ENCODE measurements at regions of chr6 and their contacts with region 1.

Region 1: GRCh38 chr6:28838634-28839442 is 84.9 kb downstream of the TRIM27 start:
- DNase-seq: peak; percentile 71 to 83
- H3K4me3 ChIP-seq: peak overlapping the region; percentile 95
- H3K27ac ChIP-seq: peak overlapping the region; percentile 44
- H3K4me1 ChIP-seq: peaks cover 13% of the 10 kb centered on the region
- H3K27me3 ChIP-seq: no peaks in the 10 kb centered on the region
- CTCF ChIP-seq: peak; percentile 74

Region 2: GRCh38 chr6:28789553-28790083 is 49.2 kb before region 1 on chr6:
- CTCF ChIA-PET with region 1: no interaction called
- POLR2A ChIA-PET with region 1: no interaction called
- intact Hi-C with region 1: loop called (anchors 1 kb)
- DNase-seq: peak; percentile 61 to 64
- H3K4me3 ChIP-seq: peak overlapping the region; percentile 65
- H3K27ac ChIP-seq: no peak overlapping the region; the same call in 1 of the 2 replicates
- H3K4me1 ChIP-seq: peaks cover 5% of the 10 kb centered on the region; the same call in 1 of the 2 replicates
- H3K27me3 ChIP-seq: no peaks in the 10 kb centered on the region; the same call in 1 of the 2 replicates
- CTCF ChIP-seq: no peak

Region 3: GRCh38 chr6:28863604-28864320 is 24.9 kb after region 1 on chr6:
- CTCF ChIA-PET with region 1: no interaction called
- POLR2A ChIA-PET with region 1: no interaction called
- intact Hi-C with region 1: loop called (anchors 1 kb)
- DNase-seq: peak; percentile 77 to 85
- H3K4me3 ChIP-seq: peak overlapping the region; percentile 81
- H3K27ac ChIP-seq: peak overlapping the region; percentile 37
- H3K4me1 ChIP-seq: peaks cover 12% of the 10 kb centered on the region
- H3K27me3 ChIP-seq: no peaks in the 10 kb centered on the region
- CTCF ChIP-seq: peak; percentile 35; the same call in 1 of the 2 replicates

Region 4: GRCh38 chr6:28895134-28895812 is 56.4 kb after region 1 on chr6:
- CTCF ChIA-PET with region 1: interaction called, 10 read pairs
- POLR2A ChIA-PET with region 1: interaction called, 4 read pairs
- intact Hi-C with region 1: loop called (anchors 1 kb)
- DNase-seq: peak; percentile 92
- H3K4me3 ChIP-seq: peak overlapping the region; percentile 92
- H3K27ac ChIP-seq: peak overlapping the region; percentile 89
- H3K4me1 ChIP-seq: peaks cover 7% of the 10 kb centered on the region
- H3K27me3 ChIP-seq: no peaks in the 10 kb centered on the region
- CTCF ChIP-seq: no peak

Region 5: GRCh38 chr6:28923318-28924102 is 84.7 kb after region 1 on chr6 and contains the start of gene TRIM27:
- CTCF ChIA-PET with region 1: interaction called, 3 read pairs
- POLR2A ChIA-PET with region 1: no interaction called
- intact Hi-C with region 1: loop called (anchors 1 kb)
- DNase-seq: peak; percentile 83 to 94
- H3K4me3 ChIP-seq: peak within 1 kb of the TSS; percentile 91
- H3K27ac ChIP-seq: peak within 1 kb of the TSS; percentile 76
- H3K4me1 ChIP-seq: peaks cover 20% of the 10 kb centered on the region
- H3K27me3 ChIP-seq: no peaks in the 10 kb centered on the region
- CTCF ChIP-seq: no peak
- total RNA-seq, gene TRIM27: 67.2 and 86.2 TPM in 2 replicates

Region 6: GRCh38 chr6:29016559-29017427 is 178.0 kb after region 1 on chr6:
- CTCF ChIA-PET with region 1: interaction called, 14 read pairs
- POLR2A ChIA-PET with region 1: no interaction called
- intact Hi-C with region 1: loop called (anchors 1 kb)
- DNase-seq: peak; percentile 62 to 77
- H3K4me3 ChIP-seq: peak overlapping the region; percentile 73
- H3K27ac ChIP-seq: no peak overlapping the region
- H3K4me1 ChIP-seq: no peaks in the 10 kb centered on the region
- H3K27me3 ChIP-seq: no peaks in the 10 kb centered on the region
- CTCF ChIP-seq: peak; percentile 94

Region 7: DNA sequence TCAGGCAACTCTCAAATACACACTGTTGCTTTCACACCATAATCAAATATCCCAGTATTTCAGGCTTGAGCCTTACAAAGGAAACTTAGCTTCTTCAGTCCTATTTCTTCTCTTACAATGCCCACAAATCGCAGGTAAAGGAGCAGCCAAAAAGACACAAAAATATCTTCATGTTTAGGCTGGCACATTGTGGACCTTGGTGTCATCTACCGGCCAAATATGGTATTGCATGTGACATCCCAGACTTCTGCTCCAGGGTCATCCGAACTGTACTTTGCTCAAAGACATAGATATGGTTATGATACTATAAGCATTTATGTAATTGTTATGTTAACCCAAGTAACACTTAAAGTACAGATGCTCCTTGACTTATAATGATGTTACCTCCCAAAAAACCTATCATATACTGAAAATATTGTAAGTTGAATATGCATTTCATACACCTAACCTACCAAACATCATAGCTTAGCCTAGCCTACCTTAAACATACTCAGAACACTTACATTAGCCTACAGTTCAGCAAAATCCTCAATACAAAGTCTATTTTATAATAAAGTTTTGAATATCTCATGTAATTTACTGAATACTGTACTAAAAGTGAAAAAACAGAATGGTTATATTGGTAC is 750.7 kb after region 1 on chr6:
- CTCF ChIA-PET with region 1: no interaction called
- POLR2A ChIA-PET with region 1: no interaction called
- intact Hi-C with region 1: loop called (anchors 1 kb)
- DNase-seq: peak in 1 of 2 experiments; percentile 45
- H3K4me3 ChIP-seq: no peak overlapping the region
- H3K27ac ChIP-seq: no peak overlapping the region
- H3K4me1 ChIP-seq: no peaks in the 10 kb centered on the region
- H3K27me3 ChIP-seq: peaks cover 51% of the 10 kb centered on the region
- CTCF ChIP-seq: peak; percentile 97